ENCODE measurements at regions of chr10 and their contacts with region 1.

Region 1: DNA sequence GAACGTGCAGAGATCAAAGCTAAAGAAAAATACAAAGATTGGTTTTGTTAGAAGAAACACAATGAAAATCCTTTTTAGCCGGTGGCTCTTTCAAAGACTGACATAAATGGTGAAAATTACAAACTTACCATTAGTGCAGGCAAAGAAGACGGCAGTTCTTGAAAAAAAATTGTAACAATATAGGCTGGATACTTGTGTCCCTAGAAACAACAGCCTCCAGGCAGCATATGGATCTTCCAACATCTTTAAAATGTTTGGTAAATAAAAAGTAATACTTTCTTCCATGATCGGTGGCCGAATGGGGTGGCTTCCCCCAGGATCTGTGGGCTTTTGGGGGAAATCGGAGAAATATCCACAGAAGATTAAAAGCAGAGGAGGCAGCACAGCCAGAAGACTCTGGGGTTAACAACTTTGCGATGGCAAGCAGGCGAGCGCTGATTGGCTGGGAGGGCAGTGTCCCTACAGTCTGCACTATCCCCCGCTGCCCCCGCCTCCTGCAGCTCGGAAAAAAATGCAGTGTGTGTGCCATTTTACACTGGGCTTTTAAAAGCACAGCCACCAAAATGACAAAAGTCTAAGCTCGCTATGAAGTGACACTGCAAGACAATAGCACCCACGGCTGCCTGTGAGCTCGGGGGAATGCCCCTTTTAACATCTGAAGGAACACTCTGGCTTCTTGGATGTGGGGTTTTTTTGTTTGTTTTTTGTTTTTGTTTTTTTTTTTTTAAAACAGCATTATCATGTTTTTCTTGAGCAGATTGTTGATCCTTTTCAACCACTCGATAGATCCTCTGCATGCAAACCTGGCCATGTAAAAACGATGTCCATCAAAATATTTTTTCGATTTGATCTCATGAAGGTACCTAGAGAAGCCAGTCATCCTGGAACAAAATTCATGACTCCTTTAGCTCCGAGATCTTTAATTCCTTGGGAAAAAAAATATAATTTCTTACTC is 31.7 kb upstream of the EPC1 start:
- DNase-seq: peak; percentile 82
- H3K4me3 ChIP-seq: peak overlapping the region; percentile 65 to 100 (median 95)
- H3K27ac ChIP-seq: peak overlapping the region; percentile 91
- H3K4me1 ChIP-seq: peaks cover 5% of the 10 kb centered on the region
- H3K27me3 ChIP-seq: no peaks in the 10 kb centered on the region
- CTCF ChIP-seq: no peak

Region 2: DNA sequence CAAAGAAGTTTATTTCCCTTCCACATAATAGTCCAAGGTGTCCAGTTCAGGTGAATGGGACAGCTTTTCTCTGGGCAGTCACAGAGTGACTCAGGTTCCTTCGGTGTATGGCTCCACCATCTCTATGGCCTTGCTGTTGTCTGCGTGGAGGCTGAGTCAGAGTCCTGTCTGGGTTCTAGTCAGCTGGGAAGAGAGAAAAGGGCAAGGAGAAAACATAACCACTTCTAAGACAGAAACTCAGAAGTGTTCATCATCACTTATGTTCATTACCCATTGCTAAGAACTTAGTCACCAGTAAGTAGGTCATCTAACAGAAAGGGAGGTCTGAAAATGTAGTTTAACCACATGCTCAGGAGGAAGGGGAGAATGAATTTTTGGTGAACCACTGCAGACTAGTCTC is 34.9 kb after region 1 on chr10:
- CTCF ChIA-PET with region 1: no interaction called
- dilution Hi-C with region 1: no loop called
- in situ Hi-C with region 1: no loop called
- intact Hi-C with region 1: loop called (anchors 1 kb)
- DNase-seq: peak; percentile 99
- H3K4me3 ChIP-seq: no peak overlapping the region
- H3K27ac ChIP-seq: peak overlapping the region; percentile 66
- H3K4me1 ChIP-seq: peaks cover 16% of the 10 kb centered on the region
- H3K27me3 ChIP-seq: no peaks in the 10 kb centered on the region
- CTCF ChIP-seq: no peak

Region 3: DNA sequence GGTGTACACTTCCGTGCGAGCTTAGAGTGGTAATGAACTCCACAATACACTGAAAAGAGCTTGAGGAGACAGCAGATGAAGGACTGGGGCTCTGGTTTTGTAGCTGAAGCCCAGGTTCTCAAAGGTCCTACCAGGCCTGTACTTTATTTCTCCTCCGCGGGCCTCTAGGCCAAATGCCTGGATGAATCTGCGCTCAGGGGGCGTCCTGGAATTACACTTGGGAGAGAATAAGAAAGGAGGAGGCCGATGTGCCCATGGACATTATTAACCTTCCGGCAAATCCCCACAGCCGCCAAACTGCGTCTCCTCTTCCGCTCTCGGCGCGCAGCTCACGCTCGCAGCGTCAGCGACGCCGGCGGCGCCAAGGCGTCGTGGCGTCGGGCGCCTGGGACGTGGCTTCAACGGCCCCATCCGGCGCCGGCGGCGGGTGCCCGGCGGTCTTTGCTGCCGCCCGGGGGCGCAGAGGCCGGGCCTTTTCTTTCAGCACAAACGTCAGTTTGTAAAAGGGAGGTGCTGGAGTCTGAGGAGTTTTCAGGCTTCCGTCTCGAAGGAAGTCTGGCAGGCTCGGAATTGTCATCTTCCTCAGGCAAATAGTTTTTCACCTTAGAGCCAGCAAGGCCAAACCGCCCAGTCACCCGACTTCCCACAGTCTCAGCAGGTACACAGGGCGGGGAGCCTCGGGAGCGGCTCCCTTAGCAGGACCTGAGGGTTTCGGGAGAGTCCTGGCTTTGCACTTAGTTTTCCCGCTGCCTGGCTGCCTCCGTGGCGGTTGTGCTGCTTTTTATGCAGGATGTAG is 67.3 kb after region 1 on chr10 and contains the start of gene CCDC7:
- CTCF ChIA-PET with region 1: no interaction called
- dilution Hi-C with region 1: no loop called
- in situ Hi-C with region 1: no loop called
- intact Hi-C with region 1: loop called (anchors 1 kb)
- DNase-seq: peak; percentile 90
- H3K4me3 ChIP-seq: peak within 1 kb of the TSS; percentile 65 to 99 (median 78)
- H3K27ac ChIP-seq: peak within 1 kb of the TSS; percentile 89
- H3K4me1 ChIP-seq: no peaks in the 10 kb centered on the region
- H3K27me3 ChIP-seq: no peaks in the 10 kb centered on the region
- CTCF ChIP-seq: peak in 1 of 2 donors; percentile 14
- total RNA-seq, gene CCDC7: 2.7 to 4.2 TPM

Measured in mammary epithelial cell (primary cell).